ENCODE measurements at regions of chr7 and their contacts with region 1.

Region 1: DNA sequence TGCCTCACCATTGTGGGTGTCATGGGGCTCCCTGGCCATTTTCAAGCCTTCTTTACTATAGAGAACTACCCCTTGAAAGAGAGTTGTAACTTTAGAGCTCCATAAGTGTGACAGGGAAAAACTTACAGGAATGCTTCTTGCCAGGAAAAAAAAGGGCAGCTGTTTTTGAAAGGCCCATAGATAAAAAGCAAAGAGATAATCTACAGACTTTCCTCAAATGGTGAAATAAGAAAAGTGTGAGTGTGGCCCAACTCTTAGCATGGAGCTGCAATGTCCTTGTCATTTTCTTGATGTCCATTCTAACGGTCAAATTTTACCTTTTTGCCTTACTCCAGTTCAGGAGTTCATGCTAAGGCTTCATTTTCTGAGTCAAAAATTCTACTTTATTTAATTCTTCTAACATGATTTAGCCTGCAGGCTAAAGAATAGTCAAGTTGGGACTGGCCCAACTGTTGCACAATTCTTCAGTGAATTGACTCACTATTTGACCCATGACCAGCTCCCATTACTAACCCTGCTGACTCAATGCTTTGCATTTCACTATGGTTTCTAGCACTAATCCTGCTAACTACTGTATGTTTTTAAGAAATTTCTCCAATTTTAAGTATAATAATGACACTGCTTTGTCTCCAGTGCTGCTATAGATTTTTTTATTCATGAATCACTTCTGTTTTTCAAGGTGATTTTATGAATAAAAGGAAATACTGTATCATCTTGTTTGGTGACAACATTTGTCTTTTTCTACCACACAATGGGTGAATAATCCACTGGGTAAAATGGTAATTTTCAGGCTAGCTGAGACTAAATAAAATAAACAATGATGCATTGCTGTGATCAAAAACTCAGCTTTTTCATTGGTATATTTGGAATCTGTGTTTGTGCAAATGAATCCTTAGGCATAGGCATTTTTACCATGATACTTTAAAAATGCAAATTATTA is 41.4 kb upstream of the SGCE start:
- DNase-seq: peak; percentile 97
- H3K4me3 Mint-ChIP-seq: no peak overlapping the region
- H3K27ac Mint-ChIP-seq: peak overlapping the region; percentile 49
- H3K4me1 Mint-ChIP-seq: peaks cover 25% of the 10 kb centered on the region
- H3K27me3 Mint-ChIP-seq: no peaks in the 10 kb centered on the region
- CTCF ChIP-seq: no peak

Region 2: DNA sequence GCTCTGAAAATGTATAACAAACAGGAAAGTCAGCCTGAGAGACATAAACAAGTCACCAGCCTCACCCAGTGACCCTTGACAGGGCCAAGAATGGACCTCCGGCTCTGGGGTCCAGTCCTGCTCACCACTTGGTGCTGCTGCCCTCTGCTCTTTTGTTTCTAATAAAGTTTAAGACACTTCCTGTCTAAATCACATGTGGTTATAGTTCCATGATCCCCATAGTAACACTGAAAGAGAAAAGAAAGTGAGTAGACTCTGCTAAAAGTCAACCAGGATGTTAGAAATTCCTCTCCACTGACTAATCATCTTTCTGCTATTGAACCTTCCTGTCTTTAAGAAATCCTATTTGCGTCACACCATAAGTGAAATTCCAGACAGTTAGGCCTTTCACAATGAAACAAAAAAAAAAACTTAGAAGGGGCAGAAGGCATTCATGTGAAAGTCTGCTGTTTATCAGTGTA is 514.0 kb before region 1 on chr7:
- CTCF ChIA-PET with region 1: no interaction called
- POLR2A ChIA-PET with region 1: no interaction called
- intact Hi-C with region 1: loop called (anchors 10 kb)
- DNase-seq: peak; percentile 96
- H3K4me3 Mint-ChIP-seq: peak overlapping the region; percentile 69
- H3K27ac Mint-ChIP-seq: peak overlapping the region; percentile 100
- H3K4me1 Mint-ChIP-seq: peaks cover 19% of the 10 kb centered on the region
- H3K27me3 Mint-ChIP-seq: no peaks in the 10 kb centered on the region
- CTCF ChIP-seq: no peak

Region 3: DNA sequence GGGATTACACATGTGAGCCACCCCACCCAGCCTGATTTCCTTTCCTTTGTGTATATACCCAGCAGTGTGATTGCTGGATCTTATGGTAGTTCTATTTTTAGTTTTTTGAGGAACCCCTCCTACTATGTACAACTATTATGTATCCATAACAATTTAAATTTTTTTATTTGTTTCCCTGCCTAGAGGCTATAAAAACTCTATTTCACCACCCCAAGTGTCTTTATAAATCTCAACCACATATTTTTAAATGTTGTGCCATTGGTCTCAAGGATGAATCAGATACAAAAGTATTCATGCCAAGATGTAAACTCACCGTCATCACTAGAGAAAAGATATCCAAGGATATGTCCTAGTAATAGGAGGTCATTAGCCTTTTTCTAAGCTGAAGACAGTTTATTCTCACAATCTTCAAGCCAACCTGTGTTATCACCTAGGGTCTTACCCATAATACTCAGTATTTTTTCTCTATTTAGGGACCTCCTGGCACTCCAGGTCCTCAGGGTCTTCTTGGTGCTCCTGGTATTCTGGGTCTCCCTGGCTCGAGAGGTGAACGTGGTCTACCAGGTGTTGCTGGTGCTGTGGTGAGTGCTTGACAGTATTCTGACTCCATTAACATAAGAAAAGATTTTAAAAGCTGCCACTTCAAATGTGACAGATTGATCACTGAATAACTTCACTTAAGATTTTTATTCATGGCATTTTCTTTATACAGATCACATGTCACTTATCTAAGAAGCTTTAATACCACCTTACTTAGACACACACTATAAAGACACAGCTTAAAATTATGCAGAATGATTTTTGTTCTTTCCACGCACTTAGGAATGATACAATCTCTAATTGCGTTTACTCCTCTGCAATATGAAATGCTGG is 273.2 kb before region 1 on chr7:
- CTCF ChIA-PET with region 1: no interaction called
- POLR2A ChIA-PET with region 1: no interaction called
- intact Hi-C with region 1: no loop called
- DNase-seq: peak; percentile 52
- H3K4me3 Mint-ChIP-seq: no peak overlapping the region
- H3K27ac Mint-ChIP-seq: peak overlapping the region; percentile 99
- H3K4me1 Mint-ChIP-seq: peaks cover 8% of the 10 kb centered on the region
- H3K27me3 Mint-ChIP-seq: no peaks in the 10 kb centered on the region
- CTCF ChIP-seq: no peak

Region 4: DNA sequence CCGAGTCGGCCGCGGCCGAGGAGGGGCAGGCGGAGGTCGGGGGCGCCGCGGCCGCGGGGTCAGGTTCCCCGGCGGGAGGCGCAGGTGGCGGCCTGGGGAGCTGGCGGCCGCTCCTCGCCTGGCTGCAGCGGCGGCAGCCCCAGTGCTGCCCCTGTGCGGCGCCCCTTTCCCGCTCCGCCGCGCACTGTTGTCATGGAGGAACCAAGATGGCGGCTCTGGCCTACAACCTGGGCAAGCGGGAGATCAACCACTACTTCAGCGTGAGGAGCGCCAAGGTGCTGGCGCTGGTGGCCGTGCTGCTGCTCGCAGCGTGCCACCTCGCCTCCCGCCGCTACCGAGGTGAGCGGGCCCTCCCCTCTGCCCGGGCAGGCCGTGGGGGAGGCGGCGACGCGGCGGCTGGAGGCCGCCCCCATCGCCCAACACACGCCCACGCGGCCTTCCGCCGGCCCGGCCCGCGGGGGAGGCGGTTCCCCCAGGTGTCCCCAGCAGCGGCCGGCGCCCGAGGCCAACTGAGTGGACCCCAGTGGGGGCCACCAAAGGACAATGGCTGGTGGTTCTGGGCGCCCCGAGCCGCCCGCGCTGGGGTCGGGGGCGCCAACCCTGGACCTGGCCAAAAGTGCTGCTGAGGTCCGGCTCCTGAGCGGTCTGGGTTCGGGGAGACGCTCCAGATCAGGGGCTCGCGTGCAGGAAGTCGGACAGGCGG is 187.3 kb before region 1 on chr7:
- CTCF ChIA-PET with region 1: no interaction called
- POLR2A ChIA-PET with region 1: interaction called, 8 read pairs
- intact Hi-C with region 1: loop called (anchors 5 kb)
- DNase-seq: peak; percentile 65
- H3K4me3 Mint-ChIP-seq: peak overlapping the region; percentile 69
- H3K27ac Mint-ChIP-seq: peak overlapping the region; percentile 43
- H3K4me1 Mint-ChIP-seq: peaks cover 32% of the 10 kb centered on the region
- H3K27me3 Mint-ChIP-seq: no peaks in the 10 kb centered on the region
- CTCF ChIP-seq: no peak

Region 5: GRCh38 chr7:94580596-94580995 is 116.7 kb before region 1 on chr7:
- CTCF ChIA-PET with region 1: no interaction called
- POLR2A ChIA-PET with region 1: no interaction called
- intact Hi-C with region 1: loop called (anchors 5 kb)
- DNase-seq: peak; percentile 27
- H3K4me3 Mint-ChIP-seq: no peak overlapping the region
- H3K27ac Mint-ChIP-seq: peak overlapping the region; percentile 21
- H3K4me1 Mint-ChIP-seq: peaks cover 46% of the 10 kb centered on the region
- H3K27me3 Mint-ChIP-seq: no peaks in the 10 kb centered on the region
- CTCF ChIP-seq: no peak

Region 6: DNA sequence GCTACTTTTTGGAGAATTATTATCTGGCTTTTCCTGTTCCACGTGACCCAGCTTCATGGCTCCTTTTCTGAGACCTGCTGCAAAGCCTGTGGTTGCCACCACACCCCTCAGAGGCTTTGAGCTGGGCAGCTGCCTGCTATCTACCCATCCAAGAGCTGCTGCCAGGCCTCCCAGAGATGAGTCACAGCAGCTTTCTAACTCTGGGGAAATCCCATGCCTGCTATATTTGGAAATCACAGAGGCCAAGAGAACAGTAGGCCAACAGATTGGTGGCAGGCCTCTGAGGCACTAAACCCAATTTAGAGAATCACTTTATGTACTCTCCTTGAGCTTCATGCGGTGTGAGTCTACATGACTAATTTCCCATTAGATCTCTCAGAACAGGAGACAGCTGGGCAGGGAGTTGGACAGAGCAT is 76.6 kb before region 1 on chr7:
- CTCF ChIA-PET with region 1: no interaction called
- POLR2A ChIA-PET with region 1: interaction called, 3 read pairs
- intact Hi-C with region 1: loop called (anchors 2 kb)
- DNase-seq: peak; percentile 97
- H3K4me3 Mint-ChIP-seq: no peak overlapping the region
- H3K27ac Mint-ChIP-seq: peak overlapping the region; percentile 75
- H3K4me1 Mint-ChIP-seq: peaks cover 13% of the 10 kb centered on the region
- H3K27me3 Mint-ChIP-seq: no peaks in the 10 kb centered on the region
- CTCF ChIP-seq: no peak

Region 7: GRCh38 chr7:94823952-94824351 is 126.6 kb after region 1 on chr7:
- CTCF ChIA-PET with region 1: no interaction called
- POLR2A ChIA-PET with region 1: no interaction called
- intact Hi-C with region 1: loop called (anchors 5 kb)
- DNase-seq: peak; percentile 80
- H3K4me3 Mint-ChIP-seq: no peak overlapping the region
- H3K27ac Mint-ChIP-seq: peak overlapping the region; percentile 77
- H3K4me1 Mint-ChIP-seq: peaks cover 12% of the 10 kb centered on the region
- H3K27me3 Mint-ChIP-seq: no peaks in the 10 kb centered on the region
- CTCF ChIP-seq: no peak

Measured in MCF 10A (cell line).